Naive thymus-derived CD4-positive, alpha-beta T cell (primary cell): ENCODE measurements at regions of chrX and their contacts with region 1.

Region 1: DNA sequence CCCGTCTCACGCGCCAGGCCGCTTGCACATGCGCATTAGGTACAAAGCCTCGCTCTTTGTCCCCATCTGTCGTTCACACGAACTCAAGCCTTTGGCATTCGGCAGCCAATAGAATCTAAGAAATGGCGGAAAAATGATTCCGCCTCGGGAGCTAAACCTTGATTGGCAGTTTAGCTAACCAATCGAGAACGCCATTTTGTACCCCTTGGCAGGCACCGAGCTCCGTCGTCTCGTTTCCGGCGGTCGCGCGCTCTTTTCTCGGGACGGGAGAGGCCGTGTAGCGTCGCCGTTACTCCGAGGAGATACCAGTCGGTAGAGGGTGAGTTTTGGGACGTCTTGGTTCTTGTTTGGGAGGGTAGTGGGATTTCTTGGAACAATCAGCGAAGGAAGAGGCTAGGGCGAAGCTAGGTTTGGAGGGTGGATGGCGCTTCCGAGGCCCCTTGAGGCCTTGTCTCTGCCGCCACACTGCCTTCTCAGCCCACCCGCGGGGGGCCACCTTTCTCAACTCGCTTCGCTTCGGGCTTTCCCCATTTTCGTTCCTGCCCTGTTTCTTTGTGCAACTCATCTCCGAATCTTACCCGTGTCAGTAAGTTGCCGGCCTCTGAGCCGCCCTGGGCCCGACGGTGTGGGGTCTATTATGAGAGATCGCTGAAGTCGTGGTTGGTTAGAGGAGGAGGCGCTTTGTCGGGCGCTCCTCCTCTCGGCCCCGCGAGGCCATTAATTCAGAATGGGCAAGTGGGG is at the start of gene NONO:
- DNase-seq: peak; percentile 48 to 96 (median 89)
- ATAC-seq: peak; percentile 91
- H3K4me3 ChIP-seq: peak within 1 kb of the TSS; percentile 88
- H3K4me3 Mint-ChIP-seq: peak within 1 kb of the TSS; percentile 94 to 99 (median 98)
- H3K27ac ChIP-seq: peak within 1 kb of the TSS; percentile 93
- H3K27ac Mint-ChIP-seq: peak within 1 kb of the TSS; percentile 97 to 100 (median 99)
- H3K4me1 ChIP-seq: peaks cover 0 to 8% of the 10 kb centered on the region in 2 donors
- H3K4me1 Mint-ChIP-seq: peaks cover under 1 to 28% (median 17%) of the 10 kb centered on the region in 7 donors
- H3K27me3 ChIP-seq: no peaks in the 10 kb centered on the region
- H3K27me3 Mint-ChIP-seq: peaks cover 0 to 3% (median 0%) of the 10 kb centered on the region in 5 donors
- total RNA-seq, gene NONO: 334 to 488 (median 371) TPM

Region 2: DNA sequence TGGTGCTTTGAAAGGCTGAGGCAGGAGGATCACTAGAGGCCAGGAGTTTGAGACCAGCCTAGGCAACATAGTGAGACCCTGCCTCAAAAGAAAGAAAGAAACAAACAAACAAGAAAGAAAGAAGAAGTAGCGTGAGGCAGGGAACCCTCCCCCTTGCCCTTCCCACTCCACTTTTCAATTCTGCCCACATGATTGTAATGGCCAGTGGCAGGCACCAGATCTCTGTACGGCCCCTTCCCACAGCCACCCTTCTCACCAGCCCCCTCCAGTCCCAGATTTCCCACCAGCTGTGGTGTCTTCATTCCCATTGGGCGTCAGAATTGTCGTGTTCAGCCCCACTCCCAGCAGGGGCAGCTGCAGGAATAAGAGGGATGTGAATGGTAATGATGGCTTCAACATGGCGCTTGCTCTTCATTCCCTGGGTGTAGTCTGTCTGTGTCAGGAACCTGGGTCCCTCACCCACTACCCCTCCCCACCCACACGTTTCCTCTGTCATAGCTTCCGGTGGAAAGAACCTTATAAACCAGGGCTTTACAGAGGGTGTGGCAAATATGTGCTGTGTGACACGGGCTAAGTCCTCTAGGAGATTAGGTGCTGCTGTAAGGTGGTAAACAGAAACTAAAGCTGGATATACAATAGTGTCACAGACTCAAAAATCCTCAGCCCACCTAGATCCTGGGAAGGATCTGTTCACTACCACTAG is 172.3 kb before region 1 on chrX and contains the start of gene IL2RG:
- CTCF ChIA-PET with region 1: no interaction called
- POLR2A ChIA-PET with region 1: interaction called, 10 read pairs
- intact Hi-C with region 1: no loop called
- DNase-seq: peak; percentile 37 to 92 (median 87)
- ATAC-seq: peak; percentile 95
- H3K4me3 ChIP-seq: peak within 1 kb of the TSS; percentile 80
- H3K4me3 Mint-ChIP-seq: peak within 1 kb of the TSS; percentile 93 to 98 (median 98)
- H3K27ac ChIP-seq: peak within 1 kb of the TSS; percentile 96
- H3K27ac Mint-ChIP-seq: peak within 1 kb of the TSS; percentile 96 to 100 (median 98)
- H3K4me1 ChIP-seq: peaks cover 28 to 39% of the 10 kb centered on the region in 2 donors
- H3K4me1 Mint-ChIP-seq: peaks cover 24 to 69% (median 43%) of the 10 kb centered on the region in 7 donors
- H3K27me3 ChIP-seq: no peaks in the 10 kb centered on the region
- H3K27me3 Mint-ChIP-seq: no peaks in the 10 kb centered on the region
- total RNA-seq, gene IL2RG: 228 to 671 (median 329) TPM

Region 3: DNA sequence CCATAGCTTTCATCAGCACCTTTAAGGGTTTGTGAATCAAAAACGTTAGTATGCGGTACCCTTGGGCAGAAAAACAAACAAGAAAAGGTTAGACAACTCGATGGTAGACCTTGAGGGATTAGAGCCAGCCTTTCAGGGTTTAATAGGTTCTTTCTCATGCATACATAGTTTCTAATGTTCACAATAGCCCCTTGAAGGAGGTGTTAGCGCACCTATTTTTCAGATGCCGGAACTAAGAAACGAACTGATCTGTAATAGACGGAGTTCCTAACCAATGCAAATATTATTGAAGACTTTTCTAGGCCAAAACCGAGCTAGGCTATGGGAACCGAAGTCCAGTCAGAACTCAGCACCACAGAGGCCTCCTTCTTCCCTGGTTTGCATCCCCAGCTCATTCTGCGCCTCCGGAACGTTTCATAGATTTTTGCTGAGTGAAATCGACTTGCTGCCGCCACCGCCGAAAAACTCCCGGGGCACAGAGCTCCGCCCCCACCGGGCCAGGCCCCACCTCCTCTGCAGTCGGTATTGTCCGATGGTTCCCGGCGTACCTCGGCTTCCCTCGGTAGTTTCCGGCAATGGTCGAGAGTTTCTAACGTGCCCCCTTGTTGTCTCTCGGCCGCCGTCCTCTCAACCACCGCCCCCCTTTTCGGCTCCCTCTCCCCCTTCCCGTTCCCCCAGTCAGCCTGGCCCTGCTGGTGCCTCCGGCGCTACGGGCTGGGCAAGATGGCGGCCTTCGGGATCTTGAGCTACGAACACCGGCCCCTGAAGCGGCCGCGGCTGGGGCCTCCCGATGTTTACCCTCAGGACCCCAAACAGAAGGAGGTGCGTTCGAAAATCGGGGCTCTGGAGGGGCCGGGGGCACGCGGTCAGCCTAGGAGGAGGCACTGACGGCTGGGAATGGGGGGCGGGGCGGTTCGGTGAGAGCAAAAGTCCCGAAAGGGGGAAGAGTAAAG is 165.3 kb before region 1 on chrX and contains the start of gene MED12:
- CTCF ChIA-PET with region 1: no interaction called
- POLR2A ChIA-PET with region 1: interaction called, 3 read pairs
- intact Hi-C with region 1: loop called in 1 of 2 experiments (anchors 2 kb)
- DNase-seq: peak; percentile 59 to 83 (median 75)
- ATAC-seq: peak; percentile 96
- H3K4me3 ChIP-seq: peak within 1 kb of the TSS; percentile 87
- H3K4me3 Mint-ChIP-seq: peak within 1 kb of the TSS; percentile 81 to 93 (median 86)
- H3K27ac ChIP-seq: peak within 1 kb of the TSS; percentile 93
- H3K27ac Mint-ChIP-seq: peak within 1 kb of the TSS; percentile 84 to 95 (median 92)
- H3K4me1 ChIP-seq: peaks cover 9 to 13% of the 10 kb centered on the region in 2 donors
- H3K4me1 Mint-ChIP-seq: peaks cover 10 to 43% (median 24%) of the 10 kb centered on the region in 7 donors
- H3K27me3 ChIP-seq: no peaks in the 10 kb centered on the region
- H3K27me3 Mint-ChIP-seq: no peaks in the 10 kb centered on the region
- total RNA-seq, gene MED12: 71.1 to 104 (median 77.4) TPM

Region 4: DNA sequence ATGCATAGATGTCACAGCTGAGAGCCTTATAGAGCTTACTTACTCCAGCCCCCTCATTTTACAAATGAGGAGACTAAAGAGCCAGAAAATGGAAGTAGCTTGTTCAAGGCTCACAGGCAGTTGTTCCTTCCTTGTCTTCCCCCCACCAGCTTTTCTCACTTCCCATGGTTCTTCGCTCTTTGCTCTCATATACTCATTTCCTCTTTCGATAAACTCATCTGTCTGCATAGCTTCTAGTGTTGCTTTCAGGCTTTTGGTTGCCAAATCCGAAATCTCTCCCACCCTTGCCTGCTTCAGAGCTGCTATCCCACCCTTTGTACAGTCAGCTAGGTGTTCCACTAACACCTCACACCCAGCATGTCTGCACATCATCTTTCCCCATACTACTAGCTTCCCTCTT is 85.5 kb before region 1 on chrX:
- CTCF ChIA-PET with region 1: no interaction called
- POLR2A ChIA-PET with region 1: interaction called, 8 read pairs
- intact Hi-C with region 1: loop called in 1 of 2 experiments (anchors 2 kb)
- DNase-seq: peak in 7 of 9 donors; percentile 8 to 40 (median 20)
- ATAC-seq: peak; percentile 69
- H3K4me3 ChIP-seq: peak overlapping the region; percentile 62
- H3K4me3 Mint-ChIP-seq: peak overlapping the region; percentile 79 to 94 (median 90)
- H3K27ac ChIP-seq: peak overlapping the region; percentile 50
- H3K27ac Mint-ChIP-seq: peak overlapping the region; percentile 80 to 94 (median 89)
- H3K4me1 ChIP-seq: peaks cover 0 to 4% of the 10 kb centered on the region in 2 donors
- H3K4me1 Mint-ChIP-seq: peaks cover 18 to 35% (median 25%) of the 10 kb centered on the region in 7 donors
- H3K27me3 ChIP-seq: no peaks in the 10 kb centered on the region
- H3K27me3 Mint-ChIP-seq: no peaks in the 10 kb centered on the region

Region 5: GRCh38 chrX:71227370-71228062 is 56.1 kb before region 1 on chrX:
- CTCF ChIA-PET with region 1: no interaction called
- POLR2A ChIA-PET with region 1: no interaction called
- intact Hi-C with region 1: no loop called
- DNase-seq: no peak
- ATAC-seq: no peak
- H3K4me3 ChIP-seq: no peak overlapping the region
- H3K4me3 Mint-ChIP-seq: no peak overlapping the region
- H3K27ac ChIP-seq: no peak overlapping the region
- H3K27ac Mint-ChIP-seq: peak overlapping the region in 1 of 9 donors; percentile 19
- H3K4me1 ChIP-seq: no peaks in the 10 kb centered on the region
- H3K4me1 Mint-ChIP-seq: peaks cover 0 to 2% (median 0%) of the 10 kb centered on the region in 7 donors
- H3K27me3 ChIP-seq: no peaks in the 10 kb centered on the region
- H3K27me3 Mint-ChIP-seq: peaks cover 0 to 7% (median 0%) of the 10 kb centered on the region in 5 donors

Region 6: DNA sequence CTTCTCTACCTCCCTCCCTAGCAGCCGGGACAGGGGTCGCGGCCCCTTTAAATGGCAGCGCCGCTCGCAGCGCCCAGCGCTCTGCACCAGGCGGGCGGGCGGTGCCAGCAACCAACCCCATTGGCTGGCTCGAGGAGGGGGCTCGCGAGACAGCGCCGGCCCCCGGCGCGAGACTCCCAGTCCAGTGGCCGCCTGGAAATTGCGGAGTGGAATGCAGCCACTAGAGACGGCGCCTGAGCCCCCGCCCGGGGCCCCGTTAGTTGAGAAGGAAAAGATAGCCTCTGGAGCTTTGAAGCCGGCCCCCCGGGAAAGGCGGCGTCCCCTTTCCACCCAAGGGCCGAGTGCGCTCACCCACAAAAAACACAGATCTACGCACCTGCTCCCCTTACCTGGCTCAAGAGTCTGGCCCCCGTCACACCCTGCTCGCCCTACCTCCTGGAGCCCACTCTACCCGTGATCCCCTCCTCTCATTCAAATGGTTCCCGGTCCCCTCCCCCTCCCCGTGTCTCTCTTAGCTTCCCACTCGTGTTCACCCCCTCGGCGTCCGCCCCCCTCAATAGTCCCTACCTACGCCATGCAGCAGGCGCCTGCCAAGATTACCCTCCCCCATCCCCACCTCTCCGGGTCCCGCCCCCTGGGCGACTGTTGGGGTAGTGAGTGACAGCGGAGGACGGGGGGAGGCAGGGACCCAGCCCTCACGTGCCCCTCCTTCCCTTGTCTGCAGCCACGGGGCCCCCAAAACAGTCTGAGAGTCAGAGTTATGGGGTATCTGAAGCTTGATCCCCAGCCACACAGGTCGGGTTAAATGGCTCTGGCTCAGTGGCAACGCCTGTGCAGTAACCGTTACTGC is 29.3 kb before region 1 on chrX and contains the start of gene ZMYM3:
- CTCF ChIA-PET with region 1: interaction called, 4 read pairs
- POLR2A ChIA-PET with region 1: interaction called, 38 read pairs
- intact Hi-C with region 1: loop called (anchors 1 kb)
- DNase-seq: peak; percentile 46 to 87 (median 78)
- ATAC-seq: peak; percentile 89
- H3K4me3 ChIP-seq: peak within 1 kb of the TSS; percentile 79
- H3K4me3 Mint-ChIP-seq: peak within 1 kb of the TSS; percentile 76 to 97 (median 90)
- H3K27ac ChIP-seq: peak within 1 kb of the TSS; percentile 91
- H3K27ac Mint-ChIP-seq: peak within 1 kb of the TSS; percentile 87 to 96 (median 91)
- H3K4me1 ChIP-seq: peaks cover 0 to 20% of the 10 kb centered on the region in 2 donors
- H3K4me1 Mint-ChIP-seq: peaks cover 0 to 30% (median 18%) of the 10 kb centered on the region in 7 donors
- H3K27me3 ChIP-seq: no peaks in the 10 kb centered on the region
- H3K27me3 Mint-ChIP-seq: no peaks in the 10 kb centered on the region
- total RNA-seq, gene ZMYM3: 21.2 to 34.1 (median 21.6) TPM

Region 7: GRCh38 chrX:71450433-71451106 is 167.0 kb after region 1 on chrX:
- CTCF ChIA-PET with region 1: no interaction called
- POLR2A ChIA-PET with region 1: no interaction called
- intact Hi-C with region 1: no loop called
- DNase-seq: no peak
- ATAC-seq: no peak
- H3K4me3 ChIP-seq: no peak overlapping the region
- H3K4me3 Mint-ChIP-seq: no peak overlapping the region
- H3K27ac ChIP-seq: no peak overlapping the region
- H3K27ac Mint-ChIP-seq: peak overlapping the region in 1 of 9 donors; percentile 14
- H3K4me1 ChIP-seq: no peaks in the 10 kb centered on the region
- H3K4me1 Mint-ChIP-seq: peaks cover 0 to 3% (median 0%) of the 10 kb centered on the region in 7 donors
- H3K27me3 ChIP-seq: no peaks in the 10 kb centered on the region
- H3K27me3 Mint-ChIP-seq: no peaks in the 10 kb centered on the region